Ascending aorta (tissue), 2 donors: ENCODE measurements at regions of chr2 and their contacts with region 1.

Region 1: GRCh38 chr2:30273261-30273861 is 42.0 kb downstream of the LBH start:
- DNase-seq: no peak
- H3K4me3 ChIP-seq: no peak overlapping the region
- H3K27ac ChIP-seq: peak overlapping the region; percentile 53 to 70
- H3K4me1 ChIP-seq: peaks cover 5 to 28% of the 10 kb centered on the region in 2 donors
- H3K27me3 ChIP-seq: no peaks in the 10 kb centered on the region
- CTCF ChIP-seq: no peak

Region 2: GRCh38 chr2:30217644-30218337 is 55.6 kb before region 1 on chr2:
- intact Hi-C with region 1: loop called (anchors 2 kb)
- DNase-seq: peak; percentile 57 to 90
- H3K4me3 ChIP-seq: peak overlapping the region in 1 of 2 donors; percentile 15
- H3K27ac ChIP-seq: peak overlapping the region; percentile 73 to 82
- H3K4me1 ChIP-seq: peaks cover 6 to 23% of the 10 kb centered on the region in 2 donors
- H3K27me3 ChIP-seq: no peaks in the 10 kb centered on the region
- CTCF ChIP-seq: no peak

Region 3: GRCh38 chr2:30346471-30347169 is 73.3 kb after region 1 on chr2:
- intact Hi-C with region 1: loop called (anchors 5 kb)
- DNase-seq: peak; percentile 19 to 87
- H3K4me3 ChIP-seq: peak overlapping the region; percentile 26 to 32
- H3K27ac ChIP-seq: peak overlapping the region; percentile 58 to 85
- H3K4me1 ChIP-seq: peaks cover 0 to 21% of the 10 kb centered on the region in 2 donors
- H3K27me3 ChIP-seq: no peaks in the 10 kb centered on the region
- CTCF ChIP-seq: no peak